WTC11 (cell line): ENCODE measurements at regions of chrX and their contacts with region 1.

Region 1: GRCh38 chrX:74536152-74536831 is 78.1 kb downstream of the RLIM start:
- DNase-seq: peak; percentile 58
- ATAC-seq: peak; percentile 55
- H3K4me3 Mint-ChIP-seq: peak overlapping the region; percentile 66
- H3K27ac Mint-ChIP-seq: no peak overlapping the region
- H3K4me1 Mint-ChIP-seq: peaks cover 34% of the 10 kb centered on the region
- H3K27me3 Mint-ChIP-seq: no peaks in the 10 kb centered on the region; the same call in 1 of the 2 replicates
- CTCF ChIP-seq: no peak

Region 2: DNA sequence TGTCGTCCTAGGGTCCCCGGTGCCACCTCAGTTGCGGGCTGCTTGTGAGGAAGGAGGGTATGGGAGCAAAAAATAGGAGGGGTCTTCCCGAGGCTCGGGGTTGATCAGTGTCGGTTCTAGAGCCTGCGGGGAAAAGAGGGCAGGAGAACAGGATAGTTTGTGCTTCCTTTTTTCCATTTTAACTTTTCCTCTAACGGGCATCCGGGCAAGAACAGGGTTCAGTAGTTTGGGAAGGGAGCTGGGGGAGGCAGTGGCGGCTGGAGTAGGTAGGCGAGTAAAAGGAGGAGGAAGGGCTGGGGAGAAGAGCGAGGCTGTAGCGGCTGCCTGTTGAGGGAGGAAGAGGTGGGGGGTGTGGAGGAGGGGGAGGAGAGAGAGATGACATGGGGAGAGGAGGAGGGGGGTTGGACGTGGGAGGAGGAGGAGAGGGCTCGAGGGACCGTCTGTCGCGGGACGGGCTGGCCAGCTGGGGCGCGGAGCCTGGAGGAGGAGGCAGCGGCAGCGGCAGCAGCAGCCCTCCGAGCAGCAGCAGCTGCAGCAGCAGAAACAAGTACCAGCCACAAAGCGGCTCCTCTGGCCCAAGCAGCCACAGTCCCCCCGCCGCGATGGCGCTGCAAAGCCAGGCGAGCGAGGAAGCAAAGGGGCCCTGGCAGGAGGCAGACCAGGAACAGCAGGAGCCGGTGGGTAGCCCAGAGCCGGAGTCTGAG is 115.1 kb before region 1 on chrX and contains the start of gene SLC16A2:
- CTCF ChIA-PET with region 1: interaction called, 17 read pairs
- POLR2A ChIA-PET with region 1: no interaction called
- DNase-seq: peak; percentile 60
- ATAC-seq: peak; percentile 8
- H3K4me3 Mint-ChIP-seq: peak within 1 kb of the TSS; percentile 81
- H3K27ac Mint-ChIP-seq: peak within 1 kb of the TSS; percentile 38; the same call in 1 of the 2 replicates
- H3K4me1 Mint-ChIP-seq: peaks cover 28% of the 10 kb centered on the region
- H3K27me3 Mint-ChIP-seq: no peaks in the 10 kb centered on the region; the same call in none of the 2 replicates
- CTCF ChIP-seq: no peak
- total RNA-seq, gene SLC16A2: 48.4 to 55.2 TPM (median 48.4 TPM) in 3 replicates